Activated CD8-positive, alpha-beta T cell treated with anti-CD3 and anti-CD28 coated beads, Interleukin-2, amount 10 ng/mL, durations not matched to agents 7 days and 5 days (primary cell): ENCODE measurements at regions of chr15 and their contacts with region 1.

Region 1: DNA sequence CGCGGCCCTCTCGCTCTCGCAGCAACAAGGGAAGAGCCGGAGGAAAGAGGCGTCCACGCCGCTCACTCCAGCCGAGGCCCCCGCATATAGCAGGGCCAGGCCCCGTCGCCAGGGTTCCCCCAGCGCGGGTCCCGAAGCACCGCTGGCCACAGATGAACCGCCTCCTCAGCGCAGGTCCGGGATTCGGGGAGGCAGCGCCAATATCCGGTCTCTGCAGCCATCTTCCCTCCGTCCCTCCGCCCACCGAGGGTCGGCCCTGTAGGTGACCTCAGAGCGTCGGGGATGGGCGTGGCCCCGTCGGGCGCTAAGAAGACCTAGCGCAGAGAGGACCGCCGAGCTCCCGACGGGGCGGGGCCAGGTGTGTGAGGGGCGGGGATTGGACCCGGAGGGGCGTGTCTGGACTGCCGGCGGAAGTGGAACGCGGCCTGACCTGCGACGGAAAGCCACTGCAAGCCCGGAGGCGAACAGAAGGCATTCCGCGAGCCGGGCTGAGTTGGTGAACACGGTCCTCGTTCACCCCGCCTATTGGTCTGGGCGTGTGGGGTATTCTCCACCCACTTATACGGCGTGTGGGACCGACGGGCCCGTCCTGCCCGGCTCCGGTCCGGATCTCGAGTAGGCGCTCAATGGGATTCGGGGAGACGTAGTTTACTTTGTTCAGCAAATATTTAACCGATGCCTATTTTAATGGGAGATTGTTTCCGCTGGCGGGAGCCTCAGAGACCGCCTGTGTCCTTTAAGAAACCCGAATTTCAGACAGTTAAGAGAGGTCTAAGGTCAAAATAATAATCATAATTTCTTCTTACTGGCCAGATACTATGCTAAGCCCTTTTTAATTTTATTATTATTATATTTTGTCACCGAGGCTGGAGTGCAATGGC is 26.9 kb upstream of the MTHFS start:
- DNase-seq: peak; percentile 98
- ATAC-seq: peak; percentile 95
- H3K4me3 Mint-ChIP-seq: peak overlapping the region; percentile 92
- H3K27ac Mint-ChIP-seq: peak overlapping the region; percentile 97
- H3K4me1 Mint-ChIP-seq: peaks cover 29% of the 10 kb centered on the region
- H3K27me3 Mint-ChIP-seq: no peaks in the 10 kb centered on the region

Region 2: DNA sequence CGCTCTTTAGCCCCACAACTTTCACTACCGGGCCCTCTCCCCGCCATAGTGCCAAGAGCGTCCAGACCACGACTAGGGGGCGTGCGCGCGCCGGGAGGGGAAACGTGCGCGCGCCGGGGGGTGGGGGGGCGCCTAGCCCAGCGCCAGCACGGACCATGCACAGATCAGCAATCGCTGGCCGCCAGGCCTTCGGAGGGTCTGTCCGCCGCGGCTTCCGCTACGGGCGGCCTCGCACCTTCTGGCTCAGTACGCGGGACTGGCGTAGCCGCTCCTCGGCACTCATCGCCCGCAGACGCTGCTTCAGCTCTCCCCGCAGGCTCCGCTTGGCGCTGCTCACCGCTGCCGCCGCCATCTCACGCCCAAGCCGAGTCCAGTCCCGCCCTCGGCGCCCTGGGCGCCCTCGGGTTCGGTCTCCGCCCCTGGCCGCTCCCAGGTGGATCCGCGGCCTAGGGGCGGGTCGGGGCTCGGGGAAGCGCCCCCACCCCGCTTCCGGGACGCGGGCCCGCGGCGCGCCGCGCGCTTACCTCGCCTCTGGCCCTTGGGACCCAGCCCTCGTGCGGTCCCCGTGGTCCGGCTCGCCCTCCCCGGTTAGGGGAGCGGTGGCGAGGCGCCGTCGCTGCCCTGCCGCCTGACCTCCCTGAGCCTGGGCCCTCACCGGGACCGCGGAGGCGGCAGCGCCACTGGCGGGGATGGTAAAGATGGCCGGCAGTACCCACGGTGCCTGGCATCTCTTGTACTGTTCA is 26.9 kb before region 1 on chr15 and contains the start of gene MTHFS:
- CTCF ChIA-PET with region 1: interaction called, 25 read pairs
- POLR2A ChIA-PET with region 1: interaction called, 114 read pairs
- DNase-seq: peak; percentile 81
- ATAC-seq: peak; percentile 86
- H3K4me3 Mint-ChIP-seq: peak within 1 kb of the TSS; percentile 97
- H3K27ac Mint-ChIP-seq: peak within 1 kb of the TSS; percentile 100
- H3K4me1 Mint-ChIP-seq: peaks cover 56% of the 10 kb centered on the region
- H3K27me3 Mint-ChIP-seq: no peaks in the 10 kb centered on the region
- total RNA-seq, gene MTHFS: 37.0 to 41.3 TPM

Region 3: DNA sequence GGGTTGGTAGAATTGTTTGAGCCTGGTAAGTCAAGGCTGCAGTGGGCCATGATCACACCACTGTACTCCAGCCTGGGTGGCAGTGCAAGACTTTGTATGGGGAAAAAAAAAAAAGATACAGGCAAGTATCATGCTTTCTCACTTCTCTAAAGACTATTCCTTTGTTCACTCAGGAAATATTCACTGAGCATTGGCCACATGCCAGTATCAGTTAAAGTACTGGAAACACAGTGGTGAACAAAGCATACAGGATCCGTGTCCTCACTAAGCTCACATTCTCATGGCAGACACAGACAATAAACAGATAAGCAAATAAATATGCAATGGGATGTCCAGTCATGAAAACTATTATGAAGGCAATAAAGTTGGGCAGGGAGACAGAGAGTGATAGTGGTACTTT is 21.8 kb before region 1 on chr15:
- CTCF ChIA-PET with region 1: interaction called, 25 read pairs
- POLR2A ChIA-PET with region 1: interaction called, 114 read pairs
- DNase-seq: no peak
- ATAC-seq: no peak
- H3K4me3 Mint-ChIP-seq: no peak overlapping the region
- H3K27ac Mint-ChIP-seq: no peak overlapping the region
- H3K4me1 Mint-ChIP-seq: peaks cover 52% of the 10 kb centered on the region
- H3K27me3 Mint-ChIP-seq: no peaks in the 10 kb centered on the region

Region 4: DNA sequence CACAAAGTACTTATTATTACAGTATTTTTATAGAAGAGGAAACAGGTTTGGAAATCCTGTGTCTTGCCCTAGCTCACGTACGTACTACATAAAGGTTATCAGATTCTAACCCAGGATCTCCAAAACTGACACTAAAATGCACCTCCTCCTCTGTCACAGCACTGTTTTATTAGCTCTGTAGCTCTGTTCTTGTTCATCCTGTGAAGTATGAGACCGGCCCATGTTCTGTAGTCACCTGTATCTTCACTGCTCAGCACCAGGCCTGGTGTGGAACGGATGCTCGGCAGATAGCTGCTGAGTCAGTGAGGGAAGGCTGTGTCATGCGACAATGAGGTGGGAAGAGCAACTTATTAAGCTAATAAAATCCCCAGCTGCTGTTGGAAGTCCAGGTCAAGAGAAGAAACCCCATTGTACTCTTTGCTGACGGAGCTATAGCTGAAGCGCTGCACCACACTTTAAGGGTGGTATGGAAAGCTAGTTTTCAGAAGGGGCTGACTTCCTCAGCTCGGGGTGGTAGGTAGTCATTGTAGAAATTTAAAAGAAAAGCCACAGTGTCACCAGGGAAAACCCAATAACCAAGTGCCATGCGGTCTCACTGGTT is 24.4 kb after region 1 on chr15:
- CTCF ChIA-PET with region 1: interaction called, 3 read pairs
- POLR2A ChIA-PET with region 1: interaction called, 16 read pairs
- DNase-seq: no peak
- ATAC-seq: peak; percentile 33
- H3K4me3 Mint-ChIP-seq: no peak overlapping the region
- H3K27ac Mint-ChIP-seq: peak overlapping the region; percentile 37
- H3K4me1 Mint-ChIP-seq: peaks cover 13% of the 10 kb centered on the region
- H3K27me3 Mint-ChIP-seq: peaks cover 4% of the 10 kb centered on the region

Region 5: GRCh38 chr15:79970624-79971434 is 47.1 kb after region 1 on chr15 and contains the start of gene BCL2A1:
- CTCF ChIA-PET with region 1: interaction called, 13 read pairs
- POLR2A ChIA-PET with region 1: interaction called, 77 read pairs
- DNase-seq: peak; percentile 73
- ATAC-seq: peak; percentile 69
- H3K4me3 Mint-ChIP-seq: peak within 1 kb of the TSS; percentile 91
- H3K27ac Mint-ChIP-seq: peak within 1 kb of the TSS; percentile 94
- H3K4me1 Mint-ChIP-seq: peaks cover 56% of the 10 kb centered on the region
- H3K27me3 Mint-ChIP-seq: no peaks in the 10 kb centered on the region
- total RNA-seq, gene BCL2A1: 23.1 to 26.3 TPM

Region 6: DNA sequence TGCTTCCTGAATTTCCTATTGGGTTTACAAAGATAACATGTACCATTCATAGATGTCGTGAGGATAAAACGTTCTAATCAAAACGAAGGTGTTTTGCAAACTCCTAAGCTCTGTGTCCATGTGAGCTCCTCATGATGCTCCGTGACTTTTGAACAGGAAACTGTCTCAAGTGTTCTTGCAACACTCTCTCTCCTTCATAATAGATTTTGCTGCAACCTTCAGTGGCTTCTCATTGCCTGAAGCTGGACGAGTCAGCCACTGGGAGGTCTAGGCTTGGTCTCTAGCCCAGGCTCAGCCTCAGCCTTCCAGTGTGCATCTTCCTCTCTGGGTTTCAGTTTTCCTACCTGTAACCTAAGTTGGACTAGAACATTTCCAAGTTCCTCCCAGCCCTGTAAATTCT is 65.9 kb after region 1 on chr15:
- CTCF ChIA-PET with region 1: interaction called, 13 read pairs
- POLR2A ChIA-PET with region 1: interaction called, 3 read pairs
- DNase-seq: no peak
- ATAC-seq: no peak
- H3K4me3 Mint-ChIP-seq: no peak overlapping the region
- H3K27ac Mint-ChIP-seq: no peak overlapping the region
- H3K4me1 Mint-ChIP-seq: peaks cover 3% of the 10 kb centered on the region
- H3K27me3 Mint-ChIP-seq: peaks cover 9% of the 10 kb centered on the region